ENCODE measurements at regions of chr3 and their contacts with region 1.

Region 1: GRCh38 chr3:186162221-186162620 is 53.3 kb upstream of the ETV5 start:
- DNase-seq: no peak
- H3K4me3 ChIP-seq: no peak overlapping the region
- H3K27ac ChIP-seq: no peak overlapping the region
- H3K4me1 ChIP-seq: no peaks in the 10 kb centered on the region
- H3K27me3 ChIP-seq: no peaks in the 10 kb centered on the region
- CTCF ChIP-seq: no peak

Region 2: GRCh38 chr3:186108941-186109865 is 53.0 kb before region 1 on chr3 and contains the start of gene ETV5:
- CTCF ChIA-PET with region 1: no interaction called
- dilution Hi-C with region 1: no loop called
- in situ Hi-C with region 1: no loop called
- intact Hi-C with region 1: no loop called
- DNase-seq: peak; percentile 100
- H3K4me3 ChIP-seq: peak within 1 kb of the TSS; percentile 71 to 92 (median 91)
- H3K27ac ChIP-seq: peak within 1 kb of the TSS; percentile 66
- H3K4me1 ChIP-seq: peaks cover 30% of the 10 kb centered on the region
- H3K27me3 ChIP-seq: no peaks in the 10 kb centered on the region
- CTCF ChIP-seq: no peak
- total RNA-seq, gene ETV5: 69.3 to 80.3 TPM

Region 3: GRCh38 chr3:186198442-186198841 is 36.2 kb after region 1 on chr3:
- CTCF ChIA-PET with region 1: no interaction called
- dilution Hi-C with region 1: loop called (anchors 5 kb)
- in situ Hi-C with region 1: no loop called
- intact Hi-C with region 1: no loop called
- DNase-seq: no peak
- H3K4me3 ChIP-seq: no peak overlapping the region
- H3K27ac ChIP-seq: no peak overlapping the region
- H3K4me1 ChIP-seq: no peaks in the 10 kb centered on the region
- H3K27me3 ChIP-seq: no peaks in the 10 kb centered on the region
- CTCF ChIP-seq: no peak

Measured in mammary epithelial cell (primary cell).